Brain microvascular endothelial cell (primary cell): ENCODE measurements at regions of chr16 and their contacts with region 1.

Region 1: DNA sequence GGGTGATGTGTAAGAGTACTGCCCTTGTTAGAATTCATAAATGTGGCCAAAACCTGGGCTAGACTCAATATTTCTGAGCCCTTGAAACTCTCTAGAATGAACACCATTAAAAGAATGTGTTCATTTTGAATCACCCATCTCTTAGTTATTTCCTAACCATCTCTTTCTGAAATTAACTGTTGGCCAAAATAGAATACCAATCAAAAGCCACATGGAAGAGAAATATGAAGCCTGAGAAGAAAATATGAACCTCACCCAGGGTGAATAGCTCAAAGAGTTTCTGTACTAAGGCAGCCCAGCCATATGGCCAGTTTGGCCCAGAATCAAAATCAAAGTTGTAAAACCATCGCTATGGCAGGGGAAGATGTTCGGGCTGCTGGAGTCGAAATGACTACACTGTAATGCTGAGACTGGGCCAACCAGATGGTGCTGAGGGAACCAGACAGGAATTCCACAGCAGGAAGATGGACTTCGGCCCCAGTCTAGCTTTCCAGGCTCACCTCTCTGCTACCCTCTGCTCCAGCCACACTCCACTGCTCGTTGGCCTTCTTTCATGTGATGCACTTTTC is 154.3 kb upstream of the ZFHX3 start:
- DNase-seq: peak; percentile 71
- H3K4me3 ChIP-seq: no peak overlapping the region
- H3K27ac ChIP-seq: peak overlapping the region; percentile 26
- H3K27me3 ChIP-seq: no peaks in the 10 kb centered on the region
- CTCF ChIP-seq: no peak

Region 2: DNA sequence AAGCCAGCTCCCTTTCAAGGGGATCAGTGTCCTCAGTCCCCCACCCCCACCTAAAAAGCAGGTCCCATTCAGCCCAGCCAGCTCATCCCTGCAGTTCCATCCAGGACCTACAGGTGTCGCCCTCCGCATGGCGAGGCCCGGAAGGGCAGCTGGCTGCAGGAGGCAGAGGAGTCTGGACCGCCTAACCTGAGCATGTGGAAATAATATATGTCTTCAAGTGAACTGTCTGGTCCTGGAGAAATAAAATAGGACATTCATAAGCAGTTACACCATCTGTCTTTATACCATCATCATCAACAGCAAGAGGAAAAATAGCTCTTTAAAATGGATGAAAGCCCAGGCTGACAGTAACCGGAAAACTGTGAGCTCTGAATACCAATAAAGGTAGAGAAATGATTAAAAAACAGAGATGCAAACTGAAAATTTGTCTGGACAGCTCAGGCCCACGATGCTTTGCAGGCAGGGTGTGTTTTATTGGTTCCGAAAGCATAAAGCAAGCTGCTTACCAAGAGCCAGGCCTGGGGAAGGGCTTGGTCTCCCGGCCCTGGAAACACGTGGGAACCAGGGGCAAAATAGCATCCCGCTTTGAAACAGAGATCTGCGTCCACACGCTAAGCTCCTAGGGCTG is 369.5 kb before region 1 on chr16:
- in situ Hi-C with region 1: loop called (anchors 25 kb)
- DNase-seq: peak; percentile 62
- H3K4me3 ChIP-seq: no peak overlapping the region
- H3K27ac ChIP-seq: no peak overlapping the region
- H3K27me3 ChIP-seq: no peaks in the 10 kb centered on the region
- CTCF ChIP-seq: peak; percentile 100

Region 3: DNA sequence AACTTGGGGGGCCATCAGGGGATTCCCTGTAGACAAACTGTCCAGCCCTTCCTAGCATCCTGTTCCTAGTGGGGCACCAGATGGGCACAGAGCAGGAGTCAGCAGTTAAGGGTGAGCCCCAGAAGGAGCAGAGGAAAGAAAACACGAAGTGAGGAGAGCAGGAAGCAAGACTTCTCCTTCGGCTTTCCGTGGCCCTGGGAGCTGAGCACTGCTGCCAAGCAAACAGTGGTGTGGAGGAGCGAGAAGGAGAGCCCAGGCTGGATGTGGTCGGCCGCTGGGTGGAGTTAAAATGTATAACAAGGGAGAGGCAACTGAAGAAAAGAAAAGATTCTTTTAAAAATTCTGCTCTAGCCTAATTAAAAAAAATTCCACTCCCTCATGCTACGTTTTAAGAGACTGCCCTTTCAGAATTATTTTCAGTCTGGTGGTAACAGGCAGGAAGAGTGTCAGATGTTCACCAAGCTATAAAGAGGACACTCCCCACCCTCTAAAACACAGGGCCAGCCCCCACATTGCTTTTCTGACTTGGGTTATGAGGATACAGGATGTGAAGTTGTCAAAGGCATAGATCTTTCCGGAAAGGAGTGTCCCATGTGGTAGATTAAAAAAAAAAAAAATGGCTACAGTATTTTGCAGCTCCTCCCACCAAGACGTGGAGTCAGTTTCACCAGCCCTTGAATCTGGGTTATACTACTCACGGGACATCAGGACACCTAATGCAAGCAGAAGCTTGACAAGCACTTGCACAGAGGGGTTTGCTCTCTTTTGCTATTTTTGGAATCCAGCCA is 79.4 kb before region 1 on chr16:
- in situ Hi-C with region 1: no loop called
- DNase-seq: peak; percentile 31
- H3K4me3 ChIP-seq: no peak overlapping the region
- H3K27ac ChIP-seq: no peak overlapping the region
- H3K27me3 ChIP-seq: no peaks in the 10 kb centered on the region
- CTCF ChIP-seq: peak; percentile 21

Region 4: DNA sequence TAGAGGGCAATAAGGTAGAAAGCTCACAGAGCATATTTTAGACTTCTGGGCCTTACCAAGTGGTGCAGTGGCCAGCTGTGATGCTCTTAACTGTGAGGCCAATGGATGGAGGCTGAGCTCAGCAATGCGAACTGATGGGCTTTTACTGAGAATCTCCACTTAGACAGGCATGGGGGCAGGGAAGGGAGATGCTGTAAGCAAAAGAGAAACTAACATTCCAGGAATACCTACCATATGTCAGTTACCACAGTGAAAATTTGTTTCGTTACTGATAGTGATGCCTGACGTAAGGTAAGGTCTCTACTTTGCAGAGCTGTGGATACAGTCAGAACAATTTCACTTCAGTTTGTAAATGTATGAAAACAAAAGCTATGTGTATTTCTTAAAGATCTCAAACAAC is 96.3 kb after region 1 on chr16:
- in situ Hi-C with region 1: no loop called
- DNase-seq: peak; percentile 87
- H3K4me3 ChIP-seq: no peak overlapping the region
- H3K27ac ChIP-seq: no peak overlapping the region
- H3K27me3 ChIP-seq: no peaks in the 10 kb centered on the region
- CTCF ChIP-seq: no peak

Region 5: DNA sequence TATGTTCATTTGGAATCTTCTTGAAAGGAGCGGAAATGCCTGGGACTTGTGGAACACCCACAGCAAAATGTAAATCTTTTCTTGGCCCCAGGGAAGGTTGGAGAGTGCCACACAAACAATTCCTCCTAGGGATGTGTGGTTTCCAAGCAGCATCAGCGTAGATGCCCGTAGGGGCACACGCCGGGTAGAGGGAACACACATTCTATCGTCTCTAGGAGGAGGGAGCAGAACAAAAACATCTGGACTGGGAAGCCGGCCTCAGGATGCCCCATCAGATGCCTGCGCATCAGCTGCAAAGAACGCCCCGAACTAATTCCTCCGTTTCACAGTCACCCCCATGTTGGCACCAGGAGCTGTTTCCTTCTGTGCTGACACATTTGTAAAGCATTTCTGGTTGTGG is 203.6 kb after region 1 on chr16:
- in situ Hi-C with region 1: no loop called
- DNase-seq: no peak
- H3K4me3 ChIP-seq: no peak overlapping the region
- H3K27ac ChIP-seq: no peak overlapping the region
- H3K27me3 ChIP-seq: no peaks in the 10 kb centered on the region
- CTCF ChIP-seq: no peak